ENCODE measurements at regions of chr3 and their contacts with region 1.

Region 1: GRCh38 chr3:153291056-153291685 is 129.1 kb downstream of the RAP2B start:
- DNase-seq: peak; percentile 17 to 67 (median 31)
- ATAC-seq: peak; percentile 84
- H3K4me3 ChIP-seq: no peak overlapping the region
- H3K27ac ChIP-seq: no peak overlapping the region
- H3K4me1 ChIP-seq: peaks cover 0 to 21% of the 10 kb centered on the region in 2 experiments; a peak in 2 of 5 replicates
- H3K27me3 ChIP-seq: no peaks in the 10 kb centered on the region
- CTCF ChIP-seq: peak; percentile 56 to 66 (median 56)
- EP300 ChIP-seq: no peak
- POLR2A ChIP-seq: no peak
- RAD21 ChIP-seq: peak; percentile 36 to 67; a peak in 3 of 4 replicates

Region 2: GRCh38 chr3:152797751-152798432 is 493.3 kb before region 1 on chr3:
- CTCF ChIA-PET with region 1: no interaction called
- POLR2A ChIA-PET with region 1: no interaction called
- in situ Hi-C with region 1: no loop called
- intact Hi-C with region 1: no loop called
- DNase-seq: no peak
- ATAC-seq: no peak
- H3K4me3 ChIP-seq: no peak overlapping the region
- H3K27ac ChIP-seq: no peak overlapping the region; the same call in 2 of the 3 replicates
- H3K4me1 ChIP-seq: peaks cover 0 to 3% of the 10 kb centered on the region in 2 experiments; a peak in 1 of 5 replicates
- H3K27me3 ChIP-seq: no peaks in the 10 kb centered on the region
- CTCF ChIP-seq: no peak
- EP300 ChIP-seq: no peak
- POLR2A ChIP-seq: no peak
- RAD21 ChIP-seq: no peak

Region 3: DNA sequence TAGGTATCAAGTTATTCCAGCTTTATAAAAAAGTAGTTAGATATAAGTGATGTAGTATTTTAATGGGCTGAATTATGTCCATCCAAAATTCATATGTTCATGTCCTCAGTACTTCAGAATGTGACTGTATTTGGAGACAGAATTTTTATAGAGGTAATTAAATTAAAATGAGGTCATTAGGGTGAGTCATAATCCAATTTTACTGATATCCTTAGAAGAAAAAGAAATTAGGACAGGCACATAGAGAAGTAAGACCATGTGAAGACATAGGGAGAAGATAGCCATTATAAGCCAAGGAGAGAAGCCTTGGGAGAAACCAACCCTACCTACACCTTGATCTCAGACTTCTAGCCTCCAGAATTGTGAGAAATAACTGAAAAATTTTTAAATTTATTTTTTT is 98.8 kb before region 1 on chr3:
- CTCF ChIA-PET with region 1: no interaction called
- POLR2A ChIA-PET with region 1: no interaction called
- in situ Hi-C with region 1: no loop called
- intact Hi-C with region 1: no loop called
- DNase-seq: no peak
- ATAC-seq: no peak
- H3K4me3 ChIP-seq: no peak overlapping the region
- H3K27ac ChIP-seq: no peak overlapping the region
- H3K4me1 ChIP-seq: peaks cover 0 to 3% of the 10 kb centered on the region in 2 experiments; a peak in 1 of 5 replicates
- H3K27me3 ChIP-seq: no peaks in the 10 kb centered on the region
- CTCF ChIP-seq: no peak
- EP300 ChIP-seq: no peak
- POLR2A ChIP-seq: no peak
- RAD21 ChIP-seq: no peak

Region 4: DNA sequence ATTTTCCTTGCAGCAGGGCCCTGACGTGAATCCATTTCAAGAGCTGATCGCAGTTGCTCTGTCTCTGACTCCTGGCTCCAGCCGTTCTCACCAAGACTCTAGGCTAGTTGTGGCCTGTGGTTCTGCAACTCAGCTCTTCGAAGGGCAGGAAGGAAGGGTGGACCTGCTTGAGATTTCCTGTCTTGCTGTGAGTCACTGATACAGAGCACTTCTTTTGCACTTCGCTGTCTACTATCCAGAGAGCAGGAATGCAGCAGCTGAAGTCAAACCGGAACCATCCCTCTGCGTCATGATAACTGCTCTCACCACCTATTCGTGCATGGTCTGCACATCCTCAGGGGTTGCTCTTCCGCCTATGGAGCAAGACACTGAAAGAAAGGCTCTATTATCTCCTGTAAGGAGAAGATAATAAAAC is 69.4 kb before region 1 on chr3:
- CTCF ChIA-PET with region 1: no interaction called
- POLR2A ChIA-PET with region 1: interaction called, 4 read pairs
- in situ Hi-C with region 1: no loop called
- intact Hi-C with region 1: loop called (anchors 5 kb)
- DNase-seq: peak; percentile 23 to 90 (median 56)
- ATAC-seq: peak; percentile 98
- H3K4me3 ChIP-seq: no peak overlapping the region
- H3K27ac ChIP-seq: peak overlapping the region; percentile 74
- H3K4me1 ChIP-seq: peaks cover 0 to 15% of the 10 kb centered on the region in 2 experiments; a peak in 2 of 5 replicates
- H3K27me3 ChIP-seq: no peaks in the 10 kb centered on the region
- CTCF ChIP-seq: no peak; a peak in 1 of 6 replicates
- EP300 ChIP-seq: peak; percentile 78
- POLR2A ChIP-seq: 0 out of 2 replicates have a peak, but pooled peaks have one; percentile 46
- RAD21 ChIP-seq: no peak; a peak in 1 of 4 replicates

Region 5: DNA sequence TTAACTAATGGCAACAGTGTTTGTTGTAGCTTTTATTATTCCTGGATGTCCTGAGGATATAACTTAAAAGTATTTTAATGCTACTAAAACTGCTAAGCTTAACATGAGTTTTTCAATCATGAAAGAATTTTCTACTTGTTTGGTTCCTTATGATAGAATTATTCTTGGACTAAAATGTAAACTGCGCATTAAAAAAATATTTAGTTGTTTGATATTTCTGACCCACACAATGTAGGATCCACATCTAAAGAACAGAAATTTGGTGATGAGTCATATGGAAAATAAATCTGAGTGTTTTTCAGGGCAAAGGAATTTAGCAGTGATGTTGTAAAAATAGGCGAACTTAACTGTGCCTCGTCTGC is 58.3 kb before region 1 on chr3:
- CTCF ChIA-PET with region 1: no interaction called
- POLR2A ChIA-PET with region 1: no interaction called
- in situ Hi-C with region 1: no loop called
- intact Hi-C with region 1: loop called (anchors 2 kb)
- DNase-seq: no peak
- ATAC-seq: no peak
- H3K4me3 ChIP-seq: no peak overlapping the region
- H3K27ac ChIP-seq: no peak overlapping the region
- H3K4me1 ChIP-seq: peaks cover 0 to 13% of the 10 kb centered on the region in 2 experiments; a peak in 3 of 5 replicates
- H3K27me3 ChIP-seq: no peaks in the 10 kb centered on the region
- CTCF ChIP-seq: no peak
- EP300 ChIP-seq: no peak
- POLR2A ChIP-seq: no peak
- RAD21 ChIP-seq: no peak

Region 6: DNA sequence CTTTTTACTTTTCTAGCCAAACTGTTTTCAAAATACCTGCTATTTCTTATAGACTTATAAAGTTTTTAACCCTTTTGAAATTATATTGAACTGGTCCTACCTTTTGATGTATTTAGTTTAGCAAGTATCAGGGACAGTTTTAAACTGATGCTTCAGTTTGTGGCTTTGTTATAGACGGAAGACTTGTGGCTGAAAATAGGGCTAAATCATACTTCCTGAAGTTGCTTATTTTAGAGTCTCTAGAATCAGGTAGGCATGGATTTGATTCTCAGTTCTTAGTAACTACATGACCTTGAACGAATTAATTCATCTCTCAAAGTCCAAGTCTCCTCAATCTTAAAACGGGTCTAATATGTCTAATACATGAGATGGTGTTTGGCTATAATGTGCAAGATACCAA is 193.7 kb after region 1 on chr3:
- CTCF ChIA-PET with region 1: no interaction called
- POLR2A ChIA-PET with region 1: no interaction called
- in situ Hi-C with region 1: no loop called
- intact Hi-C with region 1: no loop called
- DNase-seq: no peak
- ATAC-seq: no peak
- H3K4me3 ChIP-seq: no peak overlapping the region
- H3K27ac ChIP-seq: no peak overlapping the region
- H3K4me1 ChIP-seq: no peaks in the 10 kb centered on the region
- H3K27me3 ChIP-seq: no peaks in the 10 kb centered on the region; a peak in 1 of 5 replicates
- CTCF ChIP-seq: no peak
- EP300 ChIP-seq: no peak
- POLR2A ChIP-seq: no peak
- RAD21 ChIP-seq: no peak

Region 7: GRCh38 chr3:153714588-153715290 is 423.6 kb after region 1 on chr3:
- CTCF ChIA-PET with region 1: no interaction called
- POLR2A ChIA-PET with region 1: no interaction called
- in situ Hi-C with region 1: no loop called
- intact Hi-C with region 1: no loop called
- DNase-seq: no peak
- ATAC-seq: no peak
- H3K4me3 ChIP-seq: no peak overlapping the region
- H3K27ac ChIP-seq: no peak overlapping the region
- H3K4me1 ChIP-seq: no peaks in the 10 kb centered on the region
- H3K27me3 ChIP-seq: no peaks in the 10 kb centered on the region
- CTCF ChIP-seq: no peak
- EP300 ChIP-seq: no peak
- POLR2A ChIP-seq: no peak
- RAD21 ChIP-seq: no peak